ENCODE measurements at regions of chr22 and their contacts with region 1.

Region 1: GRCh38 chr22:35023692-35024363 is 42.1 kb upstream of the ISX start:
- DNase-seq: peak; percentile 73 to 74 (median 74)
- ATAC-seq: peak; percentile 65 to 84 (median 74)
- H3K4me3 ChIP-seq: no peak overlapping the region
- H3K27ac ChIP-seq: no peak overlapping the region
- H3K4me1 ChIP-seq: no peaks in the 10 kb centered on the region
- H3K27me3 ChIP-seq: no peaks in the 10 kb centered on the region
- CTCF ChIP-seq: peak; percentile 68 to 94 (median 87)
- POLR2A ChIP-seq: no peak

Region 2: GRCh38 chr22:34414484-34415440 is 609.1 kb before region 1 on chr22:
- intact Hi-C with region 1: loop called in 1 of 2 experiments (anchors 10 kb)
- DNase-seq: peak; percentile 38 to 69 (median 69)
- ATAC-seq: peak; percentile 85 to 96 (median 88)
- H3K4me3 ChIP-seq: no peak overlapping the region
- H3K27ac ChIP-seq: no peak overlapping the region
- H3K4me1 ChIP-seq: no peaks in the 10 kb centered on the region
- H3K27me3 ChIP-seq: peaks cover 0 to 5% of the 10 kb centered on the region in 2 donors
- CTCF ChIP-seq: peak; percentile 53 to 87 (median 56)
- POLR2A ChIP-seq: no peak

Region 3: DNA sequence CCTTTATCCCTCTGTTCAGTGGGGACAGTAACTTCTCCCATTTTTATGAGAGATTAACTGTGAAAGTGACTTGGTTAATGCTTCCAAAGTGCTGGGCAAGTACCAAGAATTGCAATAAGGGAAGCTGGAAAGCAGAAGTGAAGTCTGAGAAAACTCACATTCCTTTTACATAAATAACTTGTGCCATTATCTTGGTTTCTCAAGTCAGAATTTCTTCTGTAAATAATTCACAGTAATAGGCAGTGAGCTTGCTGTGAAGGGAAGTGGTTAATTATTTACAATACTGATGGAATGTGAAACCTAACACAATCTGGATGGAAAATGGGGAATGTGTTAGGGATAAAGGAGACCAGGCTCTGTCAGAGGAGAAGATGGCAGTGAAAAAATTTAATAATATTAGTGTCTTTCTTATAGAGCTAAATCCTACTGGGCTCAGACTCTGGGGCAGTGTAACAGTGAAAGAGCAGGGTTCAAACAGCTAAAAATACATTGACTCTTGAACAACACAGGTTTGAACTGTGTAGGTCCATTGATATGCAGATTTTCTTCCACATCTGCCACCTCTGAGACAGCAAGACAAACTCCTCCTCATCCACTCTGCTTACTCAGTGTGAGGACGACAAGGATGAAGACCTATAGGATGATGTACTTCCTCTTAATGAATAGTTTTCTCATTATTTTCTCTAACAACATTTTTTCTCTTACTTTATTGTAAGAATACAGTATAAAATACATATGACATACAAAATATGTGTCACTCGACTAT is 209.4 kb before region 1 on chr22:
- intact Hi-C with region 1: no loop called
- DNase-seq: no peak
- ATAC-seq: no peak
- H3K4me3 ChIP-seq: no peak overlapping the region
- H3K27ac ChIP-seq: no peak overlapping the region
- H3K4me1 ChIP-seq: no peaks in the 10 kb centered on the region
- H3K27me3 ChIP-seq: no peaks in the 10 kb centered on the region
- CTCF ChIP-seq: no peak
- POLR2A ChIP-seq: no peak

Region 4: DNA sequence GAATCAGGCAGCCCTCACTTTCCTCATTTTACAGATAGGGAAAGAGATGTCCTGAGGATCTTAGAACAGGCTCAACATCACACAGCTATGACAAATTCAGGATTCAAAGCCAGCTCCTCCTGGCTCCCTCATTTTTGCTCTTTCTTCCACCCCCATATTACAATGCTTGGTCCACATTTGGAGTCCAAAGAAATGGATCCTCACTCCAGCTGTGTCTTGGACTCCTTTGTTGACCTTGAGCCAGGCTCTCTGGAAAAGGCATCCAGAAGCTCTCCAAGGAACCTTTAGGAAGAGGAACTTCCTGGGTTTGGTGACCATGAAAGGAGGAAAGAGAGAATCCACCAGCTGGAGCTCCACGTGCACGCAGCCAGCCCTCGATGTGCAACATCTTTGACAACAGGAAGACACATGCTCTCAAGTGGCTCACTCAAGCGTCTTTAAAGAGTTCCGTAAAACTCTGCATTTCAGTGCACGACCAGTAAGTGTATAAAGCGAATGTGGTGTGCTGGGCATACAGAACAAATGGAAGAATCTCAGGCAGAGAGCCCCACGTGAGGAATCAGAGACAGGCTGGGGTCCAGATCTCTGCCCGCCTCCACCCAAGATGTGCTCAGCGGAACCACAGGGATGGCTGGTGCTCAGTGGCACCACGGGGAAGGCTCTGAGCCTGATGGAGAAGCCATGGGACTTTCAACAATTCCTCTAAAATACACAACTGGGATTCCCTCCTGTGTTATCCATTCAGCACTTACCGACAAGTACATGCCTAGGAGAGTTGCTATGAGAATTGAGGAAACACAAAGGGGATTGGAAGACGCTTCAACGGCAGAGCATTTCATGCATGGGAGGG is 90.5 kb after region 1 on chr22:
- intact Hi-C with region 1: no loop called
- DNase-seq: no peak
- ATAC-seq: no peak
- H3K4me3 ChIP-seq: no peak overlapping the region
- H3K27ac ChIP-seq: no peak overlapping the region
- H3K4me1 ChIP-seq: no peaks in the 10 kb centered on the region
- H3K27me3 ChIP-seq: no peaks in the 10 kb centered on the region
- CTCF ChIP-seq: no peak
- POLR2A ChIP-seq: no peak

Region 5: DNA sequence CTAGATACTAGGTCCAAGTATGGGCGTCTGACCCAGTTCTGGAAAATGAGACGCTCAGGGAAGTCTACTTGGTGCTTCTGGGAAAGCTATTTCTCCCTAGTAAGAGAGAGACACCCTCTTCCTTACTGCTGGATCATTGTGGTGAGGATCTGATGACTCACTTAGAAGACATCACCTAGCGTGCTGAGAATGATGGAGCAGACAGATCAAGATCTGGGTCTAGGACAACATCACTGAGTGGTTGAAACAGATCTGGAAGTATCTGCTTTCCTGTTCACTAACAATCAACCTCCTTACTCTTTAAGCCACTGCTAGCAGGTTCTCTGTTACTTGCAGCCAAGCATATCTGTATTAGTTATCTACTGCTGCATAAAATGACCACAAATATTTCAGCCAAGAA is 195.2 kb after region 1 on chr22:
- intact Hi-C with region 1: no loop called
- DNase-seq: no peak
- ATAC-seq: no peak
- H3K4me3 ChIP-seq: no peak overlapping the region
- H3K27ac ChIP-seq: no peak overlapping the region
- H3K4me1 ChIP-seq: no peaks in the 10 kb centered on the region
- H3K27me3 ChIP-seq: no peaks in the 10 kb centered on the region
- CTCF ChIP-seq: no peak
- POLR2A ChIP-seq: no peak

Measured in right lobe of liver (tissue), 6 donors.